ENCODE measurements at regions of chr6 and their contacts with region 1.

Region 1: GRCh38 chr6:161850562-161850961 is 576.7 kb upstream of the AGPAT4 start:
- DNase-seq: no peak
- ATAC-seq: no peak

Region 2: DNA sequence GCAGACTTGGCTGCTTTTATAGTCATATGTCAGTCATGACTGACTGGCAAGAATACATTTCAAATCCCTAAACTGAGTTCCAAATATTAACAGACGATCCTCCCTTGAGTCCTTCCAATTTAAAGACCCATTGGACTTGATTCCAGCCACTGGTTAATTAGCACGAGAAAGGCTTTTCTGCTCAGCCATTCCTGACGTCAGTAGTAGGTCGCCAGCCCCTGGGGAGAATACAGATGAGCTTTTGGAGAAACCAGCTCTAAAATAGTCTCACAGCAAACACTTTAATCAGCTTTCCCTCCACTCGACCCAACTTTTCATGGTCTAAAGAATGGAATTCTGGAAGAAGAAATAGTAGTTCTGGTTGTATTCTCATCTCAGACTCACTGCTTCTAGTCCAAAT is 1410.8 kb before region 1 on chr6:
- intact Hi-C with region 1: loop called (anchors 5 kb)
- DNase-seq: no peak
- ATAC-seq: no peak

Measured in sciatic nerve (tissue), 2 donors.